MCF 10A (cell line): ENCODE measurements at regions of chr14 and their contacts with region 1.

Region 1: DNA sequence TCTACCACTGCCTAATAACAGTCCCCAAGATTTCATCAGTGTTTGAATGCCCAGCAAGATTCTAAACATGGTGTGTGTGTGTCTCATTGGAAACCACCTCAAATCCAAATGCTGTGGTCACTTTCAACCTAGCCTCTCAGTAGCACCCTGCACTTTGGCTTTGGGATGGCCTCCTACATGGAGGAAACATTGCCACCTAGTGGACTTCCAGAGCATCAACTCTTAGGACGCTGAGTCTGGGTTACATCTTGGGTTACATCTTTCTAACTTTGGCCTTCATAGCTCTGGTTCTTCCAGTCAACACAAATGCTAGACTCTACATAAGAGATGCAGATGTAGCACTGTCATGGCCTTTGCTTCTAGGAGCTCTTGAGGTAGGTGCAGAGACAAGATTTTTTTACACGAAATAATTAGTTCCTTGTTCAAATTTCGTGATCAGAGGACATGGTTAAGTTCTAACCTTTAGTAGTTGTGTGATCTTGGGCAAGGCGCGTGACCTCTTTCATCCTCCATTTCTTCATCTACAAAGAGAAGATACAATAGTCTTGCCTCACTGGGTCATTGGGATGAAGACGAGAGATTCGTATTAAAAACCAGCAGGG is 113.5 kb upstream of the VASH1 start:
- DNase-seq: peak; percentile 75
- H3K4me3 Mint-ChIP-seq: no peak overlapping the region
- H3K27ac Mint-ChIP-seq: no peak overlapping the region
- H3K4me1 Mint-ChIP-seq: no peaks in the 10 kb centered on the region
- H3K27me3 Mint-ChIP-seq: no peaks in the 10 kb centered on the region
- CTCF ChIP-seq: peak; percentile 70

Region 2: GRCh38 chr14:76050797-76051392 is 596.9 kb before region 1 on chr14:
- CTCF ChIA-PET with region 1: interaction called, 165 read pairs
- POLR2A ChIA-PET with region 1: no interaction called
- intact Hi-C with region 1: loop called (anchors 1 kb)
- DNase-seq: peak; percentile 65
- H3K4me3 Mint-ChIP-seq: no peak overlapping the region
- H3K27ac Mint-ChIP-seq: no peak overlapping the region
- H3K4me1 Mint-ChIP-seq: no peaks in the 10 kb centered on the region
- H3K27me3 Mint-ChIP-seq: no peaks in the 10 kb centered on the region
- CTCF ChIP-seq: peak; percentile 84

Region 3: DNA sequence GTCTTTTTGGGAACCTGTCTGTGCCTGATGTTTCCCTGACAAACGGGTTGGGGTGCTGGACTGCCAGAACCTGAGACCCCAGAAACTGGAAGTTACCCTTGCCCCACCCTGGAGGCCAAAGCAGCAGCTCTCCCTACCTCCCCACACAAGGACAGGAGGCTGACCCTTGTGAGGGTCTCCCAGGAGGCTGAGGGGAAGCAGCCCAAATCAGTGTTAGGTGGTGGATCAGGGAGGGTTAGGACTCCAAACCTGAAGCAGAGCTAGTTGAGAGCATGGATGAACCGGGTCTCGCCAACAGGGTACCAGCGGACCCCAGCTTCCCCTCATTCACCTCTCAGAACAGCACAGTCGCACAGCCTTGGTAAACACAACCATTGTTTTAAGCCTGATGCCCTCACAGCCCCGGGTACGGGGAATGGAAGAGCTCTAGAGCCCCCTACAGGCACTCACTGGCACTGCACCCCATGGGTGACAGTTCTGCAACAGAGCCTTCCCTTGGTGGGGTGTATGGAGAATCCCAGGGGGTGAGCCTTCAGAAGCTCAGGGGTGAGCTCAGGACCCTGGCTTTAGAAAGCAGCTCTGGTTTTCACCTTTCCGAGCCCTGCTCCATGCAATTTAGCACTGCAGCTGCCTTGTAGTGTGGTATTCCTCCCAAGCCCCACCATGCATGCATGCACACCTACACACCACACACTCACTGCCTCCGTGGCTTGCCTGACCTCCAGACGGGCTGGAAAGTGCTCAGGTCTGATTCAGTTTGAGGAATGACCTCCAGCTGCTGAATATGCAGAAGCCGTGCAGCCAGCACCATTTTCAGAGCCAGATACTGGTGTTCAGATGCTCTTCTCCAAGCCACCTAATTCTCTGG is 260.6 kb before region 1 on chr14:
- CTCF ChIA-PET with region 1: interaction called, 52 read pairs
- POLR2A ChIA-PET with region 1: no interaction called
- intact Hi-C with region 1: loop called (anchors 2 kb)
- DNase-seq: peak; percentile 77
- H3K4me3 Mint-ChIP-seq: no peak overlapping the region
- H3K27ac Mint-ChIP-seq: no peak overlapping the region
- H3K4me1 Mint-ChIP-seq: peaks cover 3% of the 10 kb centered on the region
- H3K27me3 Mint-ChIP-seq: peaks cover 58% of the 10 kb centered on the region
- CTCF ChIP-seq: peak; percentile 99

Region 4: DNA sequence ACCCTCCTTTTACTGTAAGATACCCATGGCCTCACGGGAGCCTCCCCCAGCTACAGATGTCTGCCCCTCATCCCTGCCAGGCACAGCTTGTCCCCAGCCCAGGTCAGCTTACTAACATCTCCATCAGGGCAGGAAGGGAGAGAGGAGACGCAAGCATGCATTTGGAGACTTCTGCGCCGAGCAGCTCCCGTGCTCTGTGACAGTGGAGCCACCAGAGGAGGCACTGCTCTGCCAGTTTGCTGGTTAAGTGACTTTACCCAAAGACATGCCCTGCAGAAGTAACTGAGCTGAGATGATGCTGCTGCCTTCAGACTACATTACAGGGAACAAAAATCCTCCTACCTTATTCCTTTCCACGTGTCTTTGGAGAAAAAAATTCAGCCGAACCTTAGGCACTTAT is 138.5 kb before region 1 on chr14:
- CTCF ChIA-PET with region 1: interaction called, 70 read pairs
- POLR2A ChIA-PET with region 1: no interaction called
- intact Hi-C with region 1: loop called (anchors 1 kb)
- DNase-seq: no peak
- H3K4me3 Mint-ChIP-seq: no peak overlapping the region
- H3K27ac Mint-ChIP-seq: no peak overlapping the region
- H3K4me1 Mint-ChIP-seq: no peaks in the 10 kb centered on the region
- H3K27me3 Mint-ChIP-seq: peaks cover 34% of the 10 kb centered on the region
- CTCF ChIP-seq: no peak

Region 5: GRCh38 chr14:76564471-76565422 is 83.1 kb before region 1 on chr14:
- CTCF ChIA-PET with region 1: no interaction called
- POLR2A ChIA-PET with region 1: no interaction called
- intact Hi-C with region 1: no loop called
- DNase-seq: peak; percentile 55
- H3K4me3 Mint-ChIP-seq: no peak overlapping the region
- H3K27ac Mint-ChIP-seq: no peak overlapping the region
- H3K4me1 Mint-ChIP-seq: peaks cover 8% of the 10 kb centered on the region
- H3K27me3 Mint-ChIP-seq: no peaks in the 10 kb centered on the region
- CTCF ChIP-seq: no peak

Region 6: DNA sequence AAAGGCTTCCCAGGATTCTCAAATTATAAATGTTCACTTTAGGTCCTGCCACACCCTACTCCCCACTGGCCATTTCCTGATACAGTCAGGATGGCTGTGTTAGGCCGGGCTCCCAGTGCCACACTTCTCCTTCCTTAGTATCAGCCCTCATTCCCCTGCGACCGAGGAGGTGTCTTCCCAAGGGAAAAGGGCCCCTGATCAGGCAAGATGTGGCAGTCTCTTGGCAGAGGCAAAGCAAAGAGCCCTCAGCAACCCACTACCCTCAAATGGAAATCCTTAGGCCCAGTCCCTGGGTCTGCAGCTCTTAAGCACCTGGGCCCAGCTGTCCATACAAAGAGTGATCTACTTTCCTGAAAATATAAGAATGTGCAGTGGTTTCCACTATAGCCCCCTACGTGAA is 17.0 kb after region 1 on chr14:
- CTCF ChIA-PET with region 1: interaction called, 41 read pairs
- POLR2A ChIA-PET with region 1: no interaction called
- intact Hi-C with region 1: no loop called
- DNase-seq: no peak
- H3K4me3 Mint-ChIP-seq: no peak overlapping the region
- H3K27ac Mint-ChIP-seq: no peak overlapping the region
- H3K4me1 Mint-ChIP-seq: no peaks in the 10 kb centered on the region
- H3K27me3 Mint-ChIP-seq: peaks cover 4% of the 10 kb centered on the region
- CTCF ChIP-seq: no peak